Activated CD8-positive, alpha-beta memory T cell treated with anti-CD3 and anti-CD28 coated beads, Interleukin-2, amount 10 ng/mL, durations not matched to agents 7 days and 5 days (primary cell): ENCODE measurements at regions of chr14 and their contacts with region 1.

Region 1: GRCh38 chr14:65958664-65959562 is 527.3 kb upstream of the CCDC196 start:
- DNase-seq: no peak
- ATAC-seq: peak; percentile 73
- H3K4me3 Mint-ChIP-seq: no peak overlapping the region
- H3K27ac Mint-ChIP-seq: no peak overlapping the region
- H3K4me1 Mint-ChIP-seq: peaks cover 24% of the 10 kb centered on the region
- H3K27me3 Mint-ChIP-seq: peaks cover 8% of the 10 kb centered on the region

Region 2: GRCh38 chr14:65164068-65164824 is 794.7 kb before region 1 on chr14:
- CTCF ChIA-PET with region 1: interaction called, 15 read pairs
- DNase-seq: peak; percentile 48
- ATAC-seq: peak; percentile 68
- H3K4me3 Mint-ChIP-seq: no peak overlapping the region
- H3K27ac Mint-ChIP-seq: no peak overlapping the region
- H3K4me1 Mint-ChIP-seq: peaks cover 19% of the 10 kb centered on the region
- H3K27me3 Mint-ChIP-seq: no peaks in the 10 kb centered on the region

Region 3: GRCh38 chr14:65783576-65783975 is 175.3 kb before region 1 on chr14:
- CTCF ChIA-PET with region 1: no interaction called
- DNase-seq: no peak
- ATAC-seq: no peak
- H3K4me3 Mint-ChIP-seq: no peak overlapping the region
- H3K27ac Mint-ChIP-seq: no peak overlapping the region
- H3K4me1 Mint-ChIP-seq: no peaks in the 10 kb centered on the region
- H3K27me3 Mint-ChIP-seq: peaks cover 38% of the 10 kb centered on the region

Region 4: GRCh38 chr14:65824285-65824977 is 134.5 kb before region 1 on chr14:
- CTCF ChIA-PET with region 1: interaction called, 33 read pairs
- DNase-seq: peak; percentile 82
- ATAC-seq: peak; percentile 90
- H3K4me3 Mint-ChIP-seq: no peak overlapping the region
- H3K27ac Mint-ChIP-seq: peak overlapping the region; percentile 62
- H3K4me1 Mint-ChIP-seq: peaks cover 7% of the 10 kb centered on the region
- H3K27me3 Mint-ChIP-seq: no peaks in the 10 kb centered on the region

Region 5: DNA sequence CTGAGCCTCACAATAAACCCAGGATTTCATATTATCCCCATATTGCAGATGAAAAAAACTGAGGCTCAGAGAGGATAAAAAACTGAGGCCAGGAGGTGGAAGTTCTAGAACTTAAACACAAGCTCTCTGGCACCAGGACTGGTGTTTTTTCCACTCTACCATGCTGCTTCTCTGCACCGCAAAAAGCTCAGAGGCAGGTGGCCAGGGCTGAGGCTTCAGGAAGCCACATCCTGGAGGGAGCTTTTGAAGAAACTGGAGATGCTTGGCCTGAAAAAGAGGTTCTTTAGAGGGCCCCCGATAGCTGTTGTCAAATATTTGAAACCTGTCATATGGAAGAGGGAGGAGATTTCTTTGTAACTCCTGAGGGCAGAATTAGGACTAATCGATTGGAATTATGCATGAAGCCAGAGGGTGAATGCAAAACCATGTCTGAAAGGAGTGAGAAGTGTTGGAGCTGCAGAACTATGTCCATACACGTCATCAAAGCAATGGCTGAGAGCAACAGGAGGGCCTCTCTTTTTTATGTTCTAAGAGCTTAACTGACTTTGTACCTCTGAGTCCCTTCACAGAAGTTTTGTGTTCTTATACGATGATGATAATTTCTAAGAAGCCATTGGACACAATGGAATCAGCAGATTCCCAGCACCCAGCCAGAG is 97.8 kb before region 1 on chr14:
- CTCF ChIA-PET with region 1: interaction called, 13 read pairs
- DNase-seq: peak; percentile 83
- ATAC-seq: peak; percentile 80
- H3K4me3 Mint-ChIP-seq: no peak overlapping the region
- H3K27ac Mint-ChIP-seq: peak overlapping the region; percentile 70
- H3K4me1 Mint-ChIP-seq: peaks cover 53% of the 10 kb centered on the region
- H3K27me3 Mint-ChIP-seq: no peaks in the 10 kb centered on the region

Region 6: GRCh38 chr14:65927931-65928356 is 31.0 kb before region 1 on chr14:
- CTCF ChIA-PET with region 1: interaction called, 62 read pairs
- DNase-seq: peak; percentile 95
- ATAC-seq: peak; percentile 95
- H3K4me3 Mint-ChIP-seq: peak overlapping the region; percentile 27
- H3K27ac Mint-ChIP-seq: peak overlapping the region; percentile 94
- H3K4me1 Mint-ChIP-seq: peaks cover 57% of the 10 kb centered on the region
- H3K27me3 Mint-ChIP-seq: no peaks in the 10 kb centered on the region